ENCODE measurements at regions of chr2 and their contacts with region 1.

Region 1: GRCh38 chr2:233764264-233764663 is 4.2 kb downstream of the UGT1A1 start:
- DNase-seq: peak; percentile 63 to 84 (median 73)
- ATAC-seq: peak; percentile 47 to 82 (median 72)
- H3K4me3 ChIP-seq: peak overlapping the region in 2 of 3 donors; percentile 69
- H3K27ac ChIP-seq: peak overlapping the region; percentile 55 to 92 (median 91)
- H3K4me1 ChIP-seq: peaks cover 0 to 14% (median 6%) of the 10 kb centered on the region in 4 donors
- H3K27me3 ChIP-seq: no peaks in the 10 kb centered on the region
- CTCF ChIP-seq: no peak
- POLR2A ChIP-seq: peak; percentile 40

Region 2: DNA sequence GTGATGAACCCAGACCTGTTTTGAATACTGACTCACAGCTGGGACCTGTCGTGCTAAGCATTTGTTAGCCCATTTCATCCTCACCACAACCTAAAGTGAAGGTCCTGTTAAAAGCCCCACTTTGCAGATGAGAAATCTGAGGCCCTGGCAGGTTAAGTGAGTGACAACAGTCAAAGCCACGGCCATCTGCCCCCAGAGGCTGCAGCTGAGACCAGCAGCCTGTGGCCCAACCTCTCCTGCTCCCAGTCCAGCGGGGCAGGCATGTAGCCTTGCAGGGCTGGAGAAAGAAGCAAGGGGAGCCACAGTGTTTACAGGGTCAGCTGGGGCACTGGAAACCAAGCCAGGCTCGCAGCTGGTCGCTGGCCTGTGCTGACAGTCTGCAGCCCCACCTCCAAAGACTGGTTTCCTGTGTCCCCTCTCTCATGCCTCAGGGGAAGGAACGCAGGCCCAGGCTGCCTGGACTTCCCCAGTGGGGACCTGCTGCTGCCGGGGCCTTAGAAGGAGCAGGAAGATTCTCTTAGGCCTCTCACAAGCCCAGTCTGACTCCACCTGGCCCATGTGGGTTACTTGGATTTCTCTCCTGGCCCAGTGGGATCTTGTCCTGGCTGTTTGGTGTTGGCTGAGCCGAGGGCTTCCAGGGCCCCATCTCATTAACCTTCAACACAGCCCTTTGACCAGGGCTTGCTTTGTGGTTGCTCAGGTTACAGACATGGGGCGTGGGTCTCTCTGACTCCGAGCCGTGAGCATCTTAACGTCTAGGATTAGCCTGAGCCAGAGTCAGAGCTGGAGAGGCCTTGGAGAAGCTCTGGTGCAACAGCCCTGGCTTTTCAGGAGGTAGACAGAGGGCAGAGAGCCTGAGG is 702.4 kb before region 1 on chr2:
- intact Hi-C with region 1: no loop called
- DNase-seq: peak in 1 of 3 donors; percentile 59
- ATAC-seq: peak; percentile 52 to 71 (median 58)
- H3K4me3 ChIP-seq: peak overlapping the region; percentile 39 to 49 (median 41)
- H3K27ac ChIP-seq: peak overlapping the region; percentile 50 to 74 (median 57)
- H3K4me1 ChIP-seq: no peaks in the 10 kb centered on the region
- H3K27me3 ChIP-seq: no peaks in the 10 kb centered on the region
- CTCF ChIP-seq: peak in 3 of 4 donors; percentile 6 to 13 (median 10)
- POLR2A ChIP-seq: no peak

Region 3: GRCh38 chr2:233718552-233718951 is 45.7 kb before region 1 on chr2 and contains the start of gene UGT1A4:
- intact Hi-C with region 1: loop called in 1 of 2 experiments (anchors 5 kb)
- DNase-seq: peak; percentile 56 to 91 (median 88)
- ATAC-seq: peak; percentile 81 to 94 (median 88)
- H3K4me3 ChIP-seq: peak within 1 kb of the TSS; percentile 39 to 76 (median 63)
- H3K27ac ChIP-seq: peak within 1 kb of the TSS in 2 of 3 donors; percentile 72 to 91
- H3K4me1 ChIP-seq: peaks cover 0 to 37% (median 6%) of the 10 kb centered on the region in 4 donors
- H3K27me3 ChIP-seq: no peaks in the 10 kb centered on the region
- CTCF ChIP-seq: no peak
- POLR2A ChIP-seq: peak; percentile 88
- total RNA-seq, gene UGT1A4: 98.7 to 1,011 (median 214) TPM

Measured in right lobe of liver (tissue), 6 donors.